ENCODE measurements at regions of chr3 and their contacts with region 1.

Region 1: DNA sequence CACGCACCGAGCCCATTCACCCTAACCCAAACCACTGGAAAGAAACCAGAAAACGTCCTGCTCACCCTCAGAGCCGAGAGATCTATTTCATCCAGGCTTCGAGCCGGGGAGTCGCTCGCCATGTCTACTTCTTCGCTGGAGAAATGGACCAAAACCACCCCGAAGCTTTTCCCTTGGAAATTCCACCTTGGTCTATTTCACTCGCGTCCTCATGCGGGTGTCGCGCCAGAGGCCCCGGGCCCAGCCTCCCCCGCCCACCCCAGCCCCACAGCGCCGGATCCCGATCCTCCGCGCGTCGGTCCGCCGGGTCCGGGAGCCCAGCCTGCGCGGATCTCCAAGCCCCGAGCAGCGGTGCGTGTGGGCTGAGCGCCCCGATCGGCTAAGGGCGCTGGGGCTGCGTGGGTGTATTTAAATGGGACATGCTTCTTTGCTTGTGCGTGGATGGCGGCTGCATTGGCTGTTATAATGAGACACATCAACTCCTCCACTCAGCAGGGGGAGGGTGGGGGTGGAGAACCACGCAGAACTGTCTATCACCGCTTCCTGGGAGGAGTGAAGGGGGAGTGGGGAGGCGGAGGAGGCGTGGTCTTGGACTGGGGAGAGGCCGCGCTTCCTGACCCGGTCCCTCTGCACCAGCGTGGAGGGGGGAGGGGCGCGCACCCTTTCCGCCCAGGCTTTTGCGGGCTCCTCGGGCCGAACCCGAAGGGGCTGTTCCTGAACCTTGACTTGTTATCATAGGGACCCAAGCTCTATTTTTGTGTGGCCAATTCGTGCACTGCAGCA is at the start of gene TNIK:
- DNase-seq: peak; percentile 96
- ATAC-seq: peak; percentile 82
- H3K4me3 Mint-ChIP-seq: peak within 1 kb of the TSS; percentile 94
- H3K27ac Mint-ChIP-seq: peak within 1 kb of the TSS; percentile 95
- H3K4me1 Mint-ChIP-seq: peaks cover 40% of the 10 kb centered on the region
- H3K27me3 Mint-ChIP-seq: no peaks in the 10 kb centered on the region
- total RNA-seq, gene TNIK: 28.8 to 34.2 TPM

Region 2: DNA sequence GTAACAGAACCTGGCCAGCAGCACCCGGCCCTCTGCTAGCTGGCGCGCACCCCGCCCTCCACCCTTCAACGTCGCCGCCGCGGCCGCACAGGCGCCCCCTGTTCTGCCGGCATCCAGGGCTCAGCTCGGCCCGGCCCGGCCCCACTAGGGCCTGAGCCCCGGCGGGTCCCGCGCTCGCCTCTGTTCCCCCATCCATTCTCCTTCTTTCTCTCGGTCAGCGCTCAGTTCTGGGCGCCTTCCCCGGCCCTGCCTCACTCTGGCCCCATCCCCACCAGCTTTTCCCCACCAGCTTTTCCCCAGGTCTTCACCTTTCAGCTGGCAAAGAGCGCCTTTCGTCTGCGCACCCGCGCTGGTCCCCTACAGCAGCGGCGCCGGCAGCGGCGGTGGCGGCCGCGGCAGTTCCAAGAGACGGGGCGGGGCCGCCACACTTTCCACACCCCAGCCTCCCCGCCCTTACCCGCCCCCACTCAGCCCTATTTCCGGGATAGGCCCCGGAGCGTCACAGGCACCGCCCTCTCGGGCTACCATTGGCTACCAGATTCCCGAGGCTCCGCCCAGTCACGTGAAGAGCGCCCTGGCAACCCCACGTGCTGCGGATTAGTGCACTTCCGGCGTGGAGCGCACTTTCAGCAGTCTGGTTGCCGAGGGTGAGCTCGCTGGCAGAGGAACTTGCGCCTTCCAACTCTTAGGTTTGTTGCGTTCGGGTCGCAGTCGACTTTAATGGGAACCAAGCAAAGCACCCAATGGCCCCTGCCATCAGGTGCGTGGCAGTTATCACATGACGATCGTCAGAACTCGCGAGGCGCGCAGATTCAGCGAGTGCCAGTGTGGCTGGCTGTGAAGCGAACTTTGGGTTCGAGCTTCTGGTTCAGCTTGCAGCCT is 551.7 kb before region 1 on chr3 and contains the start of gene EIF5A2:
- CTCF ChIA-PET with region 1: no interaction called
- POLR2A ChIA-PET with region 1: no interaction called
- intact Hi-C with region 1: loop called in 1 of 2 experiments (anchors 1 kb)
- DNase-seq: peak; percentile 98
- ATAC-seq: peak; percentile 98
- H3K4me3 Mint-ChIP-seq: peak within 1 kb of the TSS; percentile 75
- H3K27ac Mint-ChIP-seq: peak within 1 kb of the TSS; percentile 91
- H3K4me1 Mint-ChIP-seq: peaks cover 16% of the 10 kb centered on the region
- H3K27me3 Mint-ChIP-seq: no peaks in the 10 kb centered on the region
- total RNA-seq, gene EIF5A2: 4.7 to 5.7 TPM

Region 3: DNA sequence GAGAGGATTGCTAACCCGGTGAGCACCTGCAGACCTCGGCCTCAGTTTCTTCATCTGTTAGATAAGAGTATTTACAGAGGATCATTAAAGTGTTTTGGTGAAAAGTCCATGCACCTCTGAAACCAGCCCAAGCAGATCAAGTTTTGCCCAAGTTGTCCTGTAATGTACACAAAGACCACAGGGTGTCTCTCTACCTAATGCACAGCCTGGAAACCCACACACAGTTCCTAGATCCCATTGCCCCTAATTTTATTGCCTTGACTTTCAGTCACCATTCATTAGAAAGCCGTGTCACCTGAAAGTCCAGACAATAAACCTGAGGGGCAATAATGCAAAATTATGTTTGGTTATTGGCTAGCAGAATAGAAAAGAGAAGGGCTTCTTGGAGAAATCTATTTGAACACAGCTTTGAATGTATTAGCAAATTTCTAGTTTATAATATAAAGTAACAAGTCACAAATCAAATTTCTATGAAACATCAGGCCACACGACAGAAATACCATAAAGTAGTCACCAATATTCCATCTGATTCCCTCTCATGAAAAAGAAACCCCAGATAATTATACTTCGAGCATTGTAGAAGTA is 272.3 kb before region 1 on chr3:
- CTCF ChIA-PET with region 1: interaction called, 3 read pairs
- POLR2A ChIA-PET with region 1: no interaction called
- intact Hi-C with region 1: loop called (anchors 2 kb)
- DNase-seq: no peak
- ATAC-seq: no peak
- H3K4me3 Mint-ChIP-seq: no peak overlapping the region
- H3K27ac Mint-ChIP-seq: no peak overlapping the region
- H3K4me1 Mint-ChIP-seq: peaks cover 51% of the 10 kb centered on the region
- H3K27me3 Mint-ChIP-seq: no peaks in the 10 kb centered on the region

Region 4: DNA sequence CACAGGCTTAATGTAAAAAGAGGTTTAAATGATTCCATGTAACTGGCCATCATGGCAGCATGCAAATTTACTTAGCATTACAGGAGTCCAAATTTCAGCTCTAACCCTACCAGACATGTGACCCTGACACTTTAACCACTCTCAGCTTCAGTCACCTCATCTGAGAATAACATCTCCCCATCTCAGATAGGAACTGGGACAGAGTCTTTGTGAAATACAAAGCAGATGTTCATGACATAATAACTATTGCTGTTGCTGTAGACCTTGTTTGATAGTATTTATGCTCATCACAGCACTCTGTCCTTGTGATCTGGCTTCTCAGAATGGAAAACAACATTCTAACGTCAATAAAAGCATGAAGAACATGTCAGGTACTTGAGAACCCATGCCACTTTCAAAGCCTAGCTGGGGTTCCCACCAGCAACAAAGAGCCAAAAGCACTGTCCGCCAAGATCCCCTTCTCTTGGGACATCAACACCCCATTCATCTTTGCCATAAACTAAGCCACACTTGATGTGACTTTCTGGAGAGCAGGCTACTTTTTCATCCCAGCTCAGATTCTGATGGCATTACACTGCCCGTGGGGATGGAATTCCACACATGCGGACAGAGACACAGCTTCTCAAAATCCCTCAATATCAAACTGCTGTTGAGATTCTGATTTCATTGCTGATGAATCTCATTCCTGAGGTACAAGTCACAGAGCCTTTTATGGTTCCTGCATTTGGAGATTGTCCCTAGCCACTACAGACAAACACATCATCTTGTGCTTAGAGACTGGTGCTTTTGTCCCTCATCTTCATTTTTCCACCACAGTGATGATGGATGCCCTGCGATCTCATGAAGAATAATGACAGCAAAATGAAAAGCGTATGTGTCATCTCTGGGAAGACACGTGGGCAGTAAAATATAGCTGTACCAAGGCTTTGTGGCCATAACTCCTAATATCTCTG is 202.6 kb before region 1 on chr3:
- CTCF ChIA-PET with region 1: interaction called, 4 read pairs
- POLR2A ChIA-PET with region 1: no interaction called
- intact Hi-C with region 1: loop called in 1 of 2 experiments (anchors 2 kb)
- DNase-seq: no peak
- ATAC-seq: peak; percentile 28
- H3K4me3 Mint-ChIP-seq: no peak overlapping the region
- H3K27ac Mint-ChIP-seq: peak overlapping the region; percentile 84
- H3K4me1 Mint-ChIP-seq: peaks cover 93% of the 10 kb centered on the region
- H3K27me3 Mint-ChIP-seq: no peaks in the 10 kb centered on the region

Region 5: DNA sequence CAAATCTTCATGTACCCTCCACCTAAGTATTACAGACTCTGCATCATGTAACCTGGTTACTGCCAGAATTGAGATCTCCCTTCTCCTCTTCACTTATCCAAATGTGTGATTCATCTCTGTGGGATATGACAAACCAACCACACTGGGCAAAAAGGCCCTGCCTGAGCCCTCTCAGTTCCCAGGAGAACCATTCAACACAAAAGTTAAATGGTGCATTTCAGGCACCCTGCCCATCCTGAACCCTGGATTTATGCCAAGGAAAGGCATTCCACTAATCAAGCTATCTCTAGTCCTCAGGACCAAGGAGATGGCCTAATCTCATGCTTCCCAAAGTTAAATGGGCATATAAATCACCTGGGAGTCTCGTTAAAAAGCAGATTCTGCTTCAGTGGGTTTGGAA is 108.5 kb before region 1 on chr3:
- CTCF ChIA-PET with region 1: interaction called, 4 read pairs
- POLR2A ChIA-PET with region 1: no interaction called
- intact Hi-C with region 1: loop called in 1 of 2 experiments (anchors 5 kb)
- DNase-seq: no peak
- ATAC-seq: peak; percentile 51
- H3K4me3 Mint-ChIP-seq: no peak overlapping the region
- H3K27ac Mint-ChIP-seq: no peak overlapping the region
- H3K4me1 Mint-ChIP-seq: peaks cover 81% of the 10 kb centered on the region
- H3K27me3 Mint-ChIP-seq: no peaks in the 10 kb centered on the region

Region 6: DNA sequence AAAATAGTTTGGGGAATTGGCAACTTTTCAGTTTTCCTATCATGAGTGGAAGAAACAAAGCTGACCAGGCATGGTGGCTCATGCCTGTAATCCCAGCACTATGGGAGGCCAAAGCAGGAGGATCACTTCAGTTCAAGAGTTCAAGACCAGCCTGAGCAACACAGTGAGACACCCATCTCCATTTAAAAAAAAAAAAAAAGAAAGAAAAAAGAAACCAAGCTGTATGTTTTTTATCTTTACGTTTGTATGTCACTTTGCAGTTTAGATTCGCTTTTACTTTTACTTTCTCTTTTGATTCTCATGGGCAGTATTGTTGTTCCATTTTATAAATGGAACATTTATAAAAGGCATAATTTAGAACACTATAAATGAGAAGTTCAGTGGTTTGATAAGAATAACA is 31.2 kb after region 1 on chr3:
- CTCF ChIA-PET with region 1: interaction called, 4 read pairs
- POLR2A ChIA-PET with region 1: no interaction called
- intact Hi-C with region 1: loop called (anchors 2 to 5 kb)
- DNase-seq: no peak
- ATAC-seq: peak; percentile 57
- H3K4me3 Mint-ChIP-seq: peak overlapping the region; percentile 60
- H3K27ac Mint-ChIP-seq: peak overlapping the region; percentile 88
- H3K4me1 Mint-ChIP-seq: peaks cover 47% of the 10 kb centered on the region
- H3K27me3 Mint-ChIP-seq: no peaks in the 10 kb centered on the region

Region 7: GRCh38 chr3:171566803-171567422 is 106.8 kb after region 1 on chr3:
- CTCF ChIA-PET with region 1: interaction called, 7 read pairs
- POLR2A ChIA-PET with region 1: no interaction called
- intact Hi-C with region 1: loop called (anchors 1 to 2 kb)
- DNase-seq: no peak
- ATAC-seq: peak; percentile 65
- H3K4me3 Mint-ChIP-seq: no peak overlapping the region
- H3K27ac Mint-ChIP-seq: no peak overlapping the region
- H3K4me1 Mint-ChIP-seq: peaks cover 18% of the 10 kb centered on the region
- H3K27me3 Mint-ChIP-seq: peaks cover 5% of the 10 kb centered on the region

Region 8: GRCh38 chr3:171994646-171995428 is 534.7 kb after region 1 on chr3:
- CTCF ChIA-PET with region 1: no interaction called
- POLR2A ChIA-PET with region 1: no interaction called
- intact Hi-C with region 1: no loop called
- DNase-seq: no peak
- ATAC-seq: no peak
- H3K4me3 Mint-ChIP-seq: no peak overlapping the region
- H3K27ac Mint-ChIP-seq: no peak overlapping the region
- H3K4me1 Mint-ChIP-seq: no peaks in the 10 kb centered on the region
- H3K27me3 Mint-ChIP-seq: peaks cover 5% of the 10 kb centered on the region

Region 9: DNA sequence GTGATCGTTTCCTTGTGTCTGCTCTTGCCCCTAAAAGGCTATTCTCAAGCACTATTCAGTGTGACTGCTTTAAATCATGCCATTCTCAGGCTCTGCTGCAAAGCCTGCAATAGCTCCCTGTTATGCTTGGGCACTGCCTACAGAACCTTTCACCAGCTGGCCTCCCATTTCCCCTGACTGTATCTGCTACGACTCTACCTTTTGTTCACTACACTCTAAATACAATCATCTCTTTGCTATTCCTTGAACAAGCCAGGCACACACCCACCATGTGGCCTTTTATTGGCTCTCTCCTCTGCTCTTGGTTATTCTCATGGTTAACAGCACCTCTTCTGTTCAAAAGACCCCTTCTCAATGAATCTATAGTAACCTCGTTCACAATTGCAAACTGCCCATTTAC is 549.7 kb after region 1 on chr3:
- CTCF ChIA-PET with region 1: no interaction called
- POLR2A ChIA-PET with region 1: no interaction called
- intact Hi-C with region 1: no loop called
- DNase-seq: no peak
- ATAC-seq: no peak
- H3K4me3 Mint-ChIP-seq: no peak overlapping the region
- H3K27ac Mint-ChIP-seq: no peak overlapping the region
- H3K4me1 Mint-ChIP-seq: no peaks in the 10 kb centered on the region
- H3K27me3 Mint-ChIP-seq: peaks cover 2% of the 10 kb centered on the region

Measured in activated CD4-positive, alpha-beta T cell treated with anti-CD3 and anti-CD28 coated beads for 36 hours (primary cell).